Stomach (tissue), 19 donors: ENCODE measurements at regions of chr16 and their contacts with region 1.

Region 1: GRCh38 chr16:21560462-21560861 is 38.9 kb upstream of the METTL9 start:
- DNase-seq: peak in 1 of 2 donors; percentile 14
- H3K4me3 ChIP-seq: no peak overlapping the region
- H3K27ac ChIP-seq: no peak overlapping the region
- H3K4me1 ChIP-seq: peaks cover 0 to under 1% (median under 1%) of the 10 kb centered on the region in 4 donors
- H3K27me3 ChIP-seq: peaks cover 0 to 17% (median 5%) of the 10 kb centered on the region in 3 donors
- CTCF ChIP-seq: no peak
- EP300 ChIP-seq: no peak
- POLR2A ChIP-seq: no peak

Region 2: DNA sequence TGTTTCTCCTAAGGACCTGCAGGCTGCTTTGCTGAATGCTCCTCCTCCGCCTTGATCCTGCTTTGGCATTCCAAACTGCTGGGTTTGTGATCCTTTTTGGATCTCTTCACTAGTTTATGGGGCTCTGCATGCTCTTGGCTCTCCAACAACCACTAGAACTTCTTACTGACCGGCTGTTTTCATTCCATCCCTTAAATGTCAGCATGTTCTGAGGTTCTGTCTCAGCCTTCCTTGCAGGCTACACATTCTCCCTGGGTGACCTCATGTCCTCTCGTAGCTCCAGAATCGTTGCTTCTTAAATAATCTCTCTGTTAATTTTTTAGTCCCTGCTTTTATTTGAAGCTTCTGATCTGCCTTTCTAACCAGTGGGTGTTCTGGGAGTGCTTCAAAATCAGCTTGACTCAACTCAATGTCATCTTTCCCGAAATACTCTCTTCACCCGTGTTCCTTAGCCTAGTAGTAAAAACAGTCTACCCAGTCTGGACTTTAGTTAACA is 1134.5 kb after region 1 on chr16:
- intact Hi-C with region 1: loop called (anchors 5 kb)
- DNase-seq: no peak
- H3K4me3 ChIP-seq: no peak overlapping the region
- H3K27ac ChIP-seq: peak overlapping the region in 4 of 5 donors; percentile 59 to 74 (median 66)
- H3K4me1 ChIP-seq: no peaks in the 10 kb centered on the region
- H3K27me3 ChIP-seq: peaks cover 0 to 30% (median 0%) of the 10 kb centered on the region in 3 donors
- CTCF ChIP-seq: no peak
- EP300 ChIP-seq: peak; percentile 39
- POLR2A ChIP-seq: no peak